ENCODE measurements at regions of chr5 and their contacts with region 1.

Region 1: GRCh38 chr5:161385027-161385426 is 161.5 kb downstream of the GABRB2 start:
- DNase-seq: no peak
- H3K4me3 ChIP-seq: no peak overlapping the region
- CTCF ChIP-seq: no peak

Region 2: GRCh38 chr5:161460741-161461140 is 75.7 kb after region 1 on chr5:
- in situ Hi-C with region 1: loop called (anchors 5 kb)
- DNase-seq: no peak
- H3K4me3 ChIP-seq: no peak overlapping the region
- CTCF ChIP-seq: no peak

Measured in astrocyte of the cerebellum (primary cell).